ENCODE measurements at regions of chr18 and their contacts with region 1.

Region 1: DNA sequence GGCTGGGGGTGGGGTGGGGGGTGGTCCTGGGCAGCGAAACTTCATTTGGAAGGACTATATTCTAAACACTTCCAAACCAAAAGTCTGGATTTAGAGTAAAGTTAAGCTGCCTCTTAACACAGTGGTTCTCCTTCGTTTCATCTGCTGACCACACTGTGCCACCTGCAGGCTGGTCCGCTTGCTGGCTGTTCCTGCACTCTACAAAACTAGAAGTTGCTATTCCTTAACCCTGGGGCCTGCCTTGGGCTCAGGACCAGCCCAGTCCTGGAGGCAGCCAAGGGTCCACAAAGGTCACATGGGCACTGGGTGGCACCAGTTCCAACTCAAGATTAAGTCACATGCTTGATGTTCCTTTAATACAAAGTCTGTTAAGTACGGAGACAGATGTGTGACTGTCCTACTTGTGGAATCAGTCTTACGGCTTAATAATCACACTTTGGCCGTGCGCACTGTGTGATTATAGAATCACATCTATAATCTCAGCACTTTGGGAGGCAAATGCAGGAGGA is 195.4 kb downstream of the FAM210A start:
- DNase-seq: peak; percentile 34
- H3K4me3 ChIP-seq: no peak overlapping the region
- H3K27ac ChIP-seq: no peak overlapping the region
- H3K4me1 ChIP-seq: no peaks in the 10 kb centered on the region
- CTCF ChIP-seq: peak; percentile 64

Region 2: DNA sequence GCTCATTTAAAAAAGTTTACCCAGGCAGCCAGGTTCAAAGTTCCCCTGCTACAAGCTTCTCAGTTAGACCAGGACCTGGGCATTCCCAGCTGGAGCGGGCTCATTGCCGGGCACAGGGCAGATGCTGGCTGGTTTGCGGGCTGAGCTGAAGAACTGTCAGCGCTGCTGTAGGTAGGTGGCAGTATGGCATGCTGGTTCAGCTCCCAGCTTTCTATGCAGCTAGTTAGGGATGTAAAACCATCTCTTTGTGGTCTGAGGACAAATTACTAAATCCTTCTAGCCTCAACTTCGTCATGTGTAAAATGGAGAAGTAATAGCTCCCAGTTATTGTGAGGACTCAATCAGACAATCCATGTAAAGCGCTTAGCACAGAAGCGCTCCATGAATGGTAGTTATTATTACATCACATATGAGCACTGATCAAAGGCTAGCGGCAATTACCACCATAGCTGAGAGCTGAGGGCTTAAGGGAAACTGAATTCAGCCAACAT is 314.8 kb before region 1 on chr18:
- CTCF ChIA-PET with region 1: no interaction called
- POLR2A ChIA-PET with region 1: no interaction called
- intact Hi-C with region 1: loop called (anchors 10 kb)
- DNase-seq: peak; percentile 35
- H3K4me3 ChIP-seq: no peak overlapping the region
- H3K27ac ChIP-seq: no peak overlapping the region
- H3K4me1 ChIP-seq: no peaks in the 10 kb centered on the region
- CTCF ChIP-seq: peak; percentile 76

Region 3: GRCh38 chr18:13548966-13549879 is 18.3 kb after region 1 on chr18:
- CTCF ChIA-PET with region 1: no interaction called
- POLR2A ChIA-PET with region 1: interaction called, 10 read pairs
- intact Hi-C with region 1: no loop called
- DNase-seq: peak; percentile 43
- H3K4me3 ChIP-seq: no peak overlapping the region
- H3K27ac ChIP-seq: no peak overlapping the region
- H3K4me1 ChIP-seq: peaks cover 15% of the 10 kb centered on the region
- CTCF ChIP-seq: no peak

Region 4: GRCh38 chr18:13735681-13736080 is 204.7 kb after region 1 on chr18:
- CTCF ChIA-PET with region 1: no interaction called
- POLR2A ChIA-PET with region 1: no interaction called
- intact Hi-C with region 1: no loop called
- DNase-seq: no peak
- H3K4me3 ChIP-seq: no peak overlapping the region
- H3K27ac ChIP-seq: no peak overlapping the region
- H3K4me1 ChIP-seq: no peaks in the 10 kb centered on the region
- CTCF ChIP-seq: no peak

Measured in OCI-LY7 (cell line).